Activated T-helper 2 cell treated with anti-CD3 and anti-CD28 coated beads, Interferon-gamma antibody, Interleukin-2, Interleukin-4, amounts not matched to agents 10 μg/mL and 5 μg/mL and 100 μg/mL, durations not matched to agents 14 hours and 24 hours and 36 hours (primary cell): ENCODE measurements at regions of chr10 and their contacts with region 1.

Region 1: DNA sequence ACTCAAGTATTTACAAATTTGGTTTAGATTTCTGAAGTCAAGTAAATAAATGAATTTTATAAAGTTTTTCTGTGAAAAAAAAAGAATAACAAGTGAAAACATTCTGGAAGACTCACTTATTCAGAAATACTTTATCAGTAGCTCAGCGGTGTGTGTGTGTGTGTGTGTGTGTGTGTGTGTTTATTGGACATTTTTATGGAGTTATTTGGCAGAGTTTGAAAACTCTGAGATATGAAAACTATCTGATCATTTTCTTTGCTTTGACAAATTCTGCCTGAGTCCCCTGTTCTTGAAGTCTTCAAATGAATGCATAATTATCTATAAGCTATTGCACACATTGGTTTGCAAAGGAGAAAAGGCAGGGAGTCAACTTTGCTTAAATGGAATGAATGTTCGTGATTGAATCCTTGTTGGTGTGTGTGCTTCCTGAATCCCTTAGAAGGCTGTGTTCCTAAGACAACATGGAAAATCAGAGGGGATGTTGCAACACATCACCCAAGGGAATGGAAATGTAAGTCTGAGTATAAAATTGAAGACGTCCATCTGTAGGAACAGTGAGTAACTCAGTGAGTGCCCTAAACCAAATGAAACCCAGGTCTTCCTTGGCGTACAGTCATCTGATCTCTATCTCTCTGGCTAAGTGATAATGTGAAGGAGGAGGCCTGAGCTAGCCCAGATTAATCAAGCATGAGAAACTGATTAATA is 160.9 kb downstream of the REEP3 start:
- DNase-seq: no peak
- H3K4me3 Mint-ChIP-seq: no peak overlapping the region
- H3K27ac Mint-ChIP-seq: no peak overlapping the region
- H3K4me1 Mint-ChIP-seq: peaks cover 17% of the 10 kb centered on the region
- H3K27me3 Mint-ChIP-seq: peaks cover 21% of the 10 kb centered on the region

Region 2: DNA sequence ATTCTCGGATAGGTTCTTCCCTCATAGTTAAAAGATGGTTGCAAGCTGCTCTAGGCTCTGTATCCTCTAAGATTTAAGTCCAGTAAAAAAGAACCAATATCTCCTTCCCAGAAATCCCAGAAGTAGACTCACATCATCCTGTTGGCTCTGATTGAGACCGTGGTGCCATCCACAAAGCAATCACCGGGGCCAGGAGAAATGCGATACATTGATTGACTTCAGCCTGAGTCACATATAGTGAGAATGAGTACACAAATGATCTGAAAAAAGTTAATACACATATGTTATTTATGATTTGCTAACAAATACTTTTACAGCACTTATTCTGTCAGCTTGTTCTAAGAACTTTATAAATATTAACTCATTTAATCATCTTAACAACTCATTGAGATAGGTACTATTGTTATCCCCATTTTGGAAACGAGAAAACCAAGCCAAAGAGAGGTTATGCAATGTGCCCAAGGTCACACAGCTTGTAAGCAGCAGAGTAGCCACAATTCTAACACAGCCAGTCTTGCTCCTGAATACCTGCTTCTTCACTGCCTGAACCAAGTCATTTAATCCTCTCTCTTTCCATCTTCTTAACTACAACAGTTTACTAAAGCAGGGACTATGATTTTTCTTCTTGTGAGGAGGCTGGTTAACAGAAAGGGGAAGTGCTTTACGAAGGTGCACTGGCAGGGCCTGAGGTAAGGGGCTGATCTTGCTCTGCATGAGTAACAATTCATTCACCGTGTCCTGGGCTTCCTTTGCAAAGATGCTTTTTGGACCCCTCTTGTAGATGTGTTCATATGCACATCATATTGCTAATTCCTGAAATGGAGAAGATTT is 16.0 kb after region 1 on chr10:
- intact Hi-C with region 1: loop called (anchors 1 kb)
- DNase-seq: no peak
- H3K4me3 Mint-ChIP-seq: no peak overlapping the region
- H3K27ac Mint-ChIP-seq: no peak overlapping the region
- H3K4me1 Mint-ChIP-seq: peaks cover 9% of the 10 kb centered on the region
- H3K27me3 Mint-ChIP-seq: peaks cover 3% of the 10 kb centered on the region